Activated CD4-positive, alpha-beta T cell treated with anti-CD3 and anti-CD28 coated beads, Interleukin-2, amount 10 ng/mL, durations not matched to agents 7 days and 5 days (primary cell): ENCODE measurements at regions of chr18 and their contacts with region 1.

Region 1: GRCh38 chr18:58768293-58768974 is 96.2 kb upstream of the ZNF532 start:
- DNase-seq: peak; percentile 71
- H3K4me3 Mint-ChIP-seq: no peak overlapping the region
- H3K27ac Mint-ChIP-seq: no peak overlapping the region
- H3K4me1 Mint-ChIP-seq: peaks cover 24% of the 10 kb centered on the region
- H3K27me3 Mint-ChIP-seq: peaks cover 54% of the 10 kb centered on the region

Region 2: GRCh38 chr18:58496937-58497336 is 271.5 kb before region 1 on chr18:
- CTCF ChIA-PET with region 1: interaction called, 11 read pairs
- POLR2A ChIA-PET with region 1: no interaction called
- DNase-seq: no peak
- H3K4me3 Mint-ChIP-seq: no peak overlapping the region
- H3K27ac Mint-ChIP-seq: no peak overlapping the region
- H3K4me1 Mint-ChIP-seq: peaks cover 15% of the 10 kb centered on the region
- H3K27me3 Mint-ChIP-seq: peaks cover 25% of the 10 kb centered on the region

Region 3: GRCh38 chr18:58529714-58530354 is 238.6 kb before region 1 on chr18:
- CTCF ChIA-PET with region 1: interaction called, 28 read pairs
- POLR2A ChIA-PET with region 1: interaction called, 4 read pairs
- DNase-seq: peak; percentile 71
- H3K4me3 Mint-ChIP-seq: no peak overlapping the region
- H3K27ac Mint-ChIP-seq: no peak overlapping the region
- H3K4me1 Mint-ChIP-seq: peaks cover 4% of the 10 kb centered on the region
- H3K27me3 Mint-ChIP-seq: peaks cover 19% of the 10 kb centered on the region

Region 4: DNA sequence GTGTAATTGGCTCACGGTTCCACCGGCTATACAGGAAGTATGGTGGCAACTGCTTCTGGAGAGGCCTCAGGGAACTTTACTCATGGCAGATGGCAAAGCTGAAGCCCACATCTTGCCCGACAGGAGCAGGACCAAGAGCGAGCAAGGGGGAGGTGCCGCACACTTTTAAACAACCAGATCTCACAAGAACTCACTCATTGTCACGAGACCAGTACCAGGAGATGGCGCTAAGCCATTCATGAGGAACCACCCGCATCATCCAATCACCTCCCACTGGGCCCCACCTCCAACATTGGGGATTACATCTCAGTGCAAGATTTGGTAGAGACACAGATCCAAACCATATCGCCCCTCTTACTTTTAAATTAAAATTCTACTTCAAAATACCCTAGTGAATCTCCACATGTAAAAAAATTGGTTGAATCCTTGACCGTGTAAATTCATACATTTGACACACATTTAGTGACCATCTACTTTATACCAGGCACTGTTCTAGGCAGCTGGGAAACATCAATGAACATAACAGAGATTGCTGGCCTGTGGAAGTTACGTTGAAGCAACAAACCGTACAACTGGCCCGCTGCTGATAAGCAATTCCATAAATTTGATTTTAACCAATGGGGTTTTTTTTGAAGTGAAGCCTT is 227.2 kb before region 1 on chr18:
- CTCF ChIA-PET with region 1: interaction called, 14 read pairs
- POLR2A ChIA-PET with region 1: no interaction called
- DNase-seq: no peak
- H3K4me3 Mint-ChIP-seq: no peak overlapping the region
- H3K27ac Mint-ChIP-seq: no peak overlapping the region
- H3K4me1 Mint-ChIP-seq: peaks cover 43% of the 10 kb centered on the region
- H3K27me3 Mint-ChIP-seq: peaks cover 4% of the 10 kb centered on the region

Region 5: GRCh38 chr18:58671111-58671631 is 97.3 kb before region 1 on chr18 and contains the start of gene MALT1:
- CTCF ChIA-PET with region 1: interaction called, 10 read pairs
- POLR2A ChIA-PET with region 1: no interaction called
- DNase-seq: peak; percentile 94
- H3K4me3 Mint-ChIP-seq: peak within 1 kb of the TSS; percentile 96
- H3K27ac Mint-ChIP-seq: peak within 1 kb of the TSS; percentile 97
- H3K4me1 Mint-ChIP-seq: peaks cover 64% of the 10 kb centered on the region
- H3K27me3 Mint-ChIP-seq: peaks cover 2% of the 10 kb centered on the region
- total RNA-seq, gene MALT1: 52.1 to 57.0 TPM

Region 6: DNA sequence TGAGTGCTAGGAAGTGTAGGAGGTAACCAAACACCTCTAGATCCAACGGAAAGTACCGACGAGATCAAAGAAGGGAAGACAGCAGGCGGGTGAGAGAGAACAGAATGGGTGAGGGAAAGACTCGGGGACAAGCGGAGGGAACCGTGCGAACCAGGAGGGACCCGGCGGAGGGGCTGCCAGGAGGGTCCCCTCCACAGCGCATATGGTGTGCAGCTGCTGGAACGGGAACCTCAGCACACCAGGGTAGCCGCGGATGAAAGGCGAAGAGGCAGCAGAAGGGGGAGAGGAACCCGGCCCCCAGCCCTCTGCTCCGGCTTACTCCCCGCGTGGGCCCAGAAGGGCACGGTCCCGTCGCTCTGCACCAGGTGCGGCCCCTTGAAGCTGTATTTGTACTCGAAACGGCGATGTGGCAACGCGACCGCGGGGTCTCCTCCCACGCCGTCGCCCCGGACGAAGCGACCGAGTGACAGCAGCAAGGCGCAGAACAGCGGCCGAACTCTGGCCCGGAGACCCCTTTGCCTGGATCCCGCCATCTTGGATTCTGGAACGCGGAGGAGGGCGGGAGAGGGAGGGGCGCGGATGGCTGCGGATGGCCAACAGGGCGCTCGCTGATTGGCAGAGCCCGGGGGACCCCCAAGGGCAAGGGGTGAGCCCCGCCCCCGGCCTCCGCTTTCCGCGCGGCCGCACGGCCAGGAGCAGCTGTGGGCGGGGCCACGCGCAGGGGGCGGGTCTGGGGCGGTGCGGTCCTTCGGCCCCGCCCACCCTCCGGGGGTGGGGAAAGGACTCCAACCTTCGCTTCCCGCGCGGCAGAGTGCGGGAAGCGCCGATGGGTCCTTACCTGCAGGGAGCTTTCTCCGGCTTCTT is 590.5 kb after region 1 on chr18 and contains the start of gene LMAN1:
- CTCF ChIA-PET with region 1: no interaction called
- POLR2A ChIA-PET with region 1: no interaction called
- DNase-seq: peak; percentile 89
- H3K4me3 Mint-ChIP-seq: peak within 1 kb of the TSS; percentile 87
- H3K27ac Mint-ChIP-seq: peak within 1 kb of the TSS; percentile 95
- H3K4me1 Mint-ChIP-seq: peaks cover 43% of the 10 kb centered on the region
- H3K27me3 Mint-ChIP-seq: peaks cover 2% of the 10 kb centered on the region
- total RNA-seq, gene LMAN1: 52.8 to 55.4 TPM

Region 7: DNA sequence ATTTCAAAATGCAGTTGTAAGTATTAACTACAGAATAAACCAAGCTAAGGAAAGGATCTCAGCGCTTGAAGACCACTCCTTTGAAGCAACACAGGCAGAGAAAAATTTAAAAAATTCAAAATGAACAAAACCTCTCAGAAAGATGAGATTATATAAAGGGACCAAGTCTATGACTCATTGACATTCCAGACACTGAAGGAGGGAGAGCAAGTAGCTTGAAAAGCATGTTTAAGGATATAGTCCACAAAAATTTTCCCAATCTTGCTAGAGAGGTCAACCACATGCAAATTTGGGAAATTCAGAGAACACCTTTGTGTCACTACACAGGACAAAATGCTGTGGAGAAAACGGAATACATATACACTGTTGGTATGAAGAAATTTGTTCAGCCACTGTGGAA is 1716.8 kb after region 1 on chr18:
- CTCF ChIA-PET with region 1: no interaction called
- POLR2A ChIA-PET with region 1: no interaction called
- DNase-seq: no peak
- H3K4me3 Mint-ChIP-seq: no peak overlapping the region
- H3K27ac Mint-ChIP-seq: no peak overlapping the region
- H3K4me1 Mint-ChIP-seq: no peaks in the 10 kb centered on the region
- H3K27me3 Mint-ChIP-seq: no peaks in the 10 kb centered on the region